IMR-90 (cell line): ENCODE measurements at regions of chr6 and their contacts with region 1.

Region 1: DNA sequence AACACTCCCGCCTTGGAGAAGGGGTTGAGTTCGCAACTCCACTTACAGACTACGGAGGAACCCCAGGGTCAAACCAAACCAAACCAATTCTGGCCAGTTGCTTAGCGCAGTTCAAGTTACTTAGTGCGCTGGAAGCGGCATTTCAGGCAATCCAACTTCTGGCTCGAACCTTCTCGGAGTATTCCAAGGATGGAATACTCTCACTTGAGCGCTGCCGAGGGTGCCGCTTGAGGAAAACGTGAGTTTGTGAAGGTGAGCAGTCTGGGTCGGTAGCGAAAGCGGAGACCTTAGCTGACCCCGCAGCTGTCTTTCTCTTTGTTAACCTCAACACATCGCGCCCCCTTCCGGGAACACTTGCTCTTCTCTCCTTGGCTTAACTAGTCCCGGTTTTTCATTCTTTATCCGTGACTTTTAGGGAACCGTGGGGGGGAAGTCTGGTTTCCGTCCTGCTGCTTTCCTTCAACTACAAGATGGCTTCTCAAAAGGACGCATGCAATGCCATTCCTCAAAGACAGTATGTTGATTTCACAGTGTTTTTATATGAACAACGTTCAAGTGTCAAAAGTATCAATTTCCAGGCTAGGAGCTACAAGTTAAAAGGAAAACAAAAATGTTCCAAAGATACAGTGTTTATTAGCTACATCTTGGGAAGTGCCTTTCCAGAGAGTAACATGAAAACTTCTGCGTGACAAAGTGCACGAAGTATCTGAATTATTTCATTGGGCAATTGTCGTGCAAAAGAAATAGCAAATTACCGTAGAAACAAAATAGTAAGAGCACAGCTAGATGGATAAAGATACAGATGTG is 742 bp upstream of the PNISR start:
- DNase-seq: peak; percentile 89
- ATAC-seq: peak; percentile 66
- H3K4me3 ChIP-seq: peak overlapping the region; percentile 52
- H3K27ac ChIP-seq: peak overlapping the region; percentile 92
- H3K4me1 ChIP-seq: peaks cover 2% of the 10 kb centered on the region
- H3K27me3 ChIP-seq: no peaks in the 10 kb centered on the region
- CTCF ChIP-seq: peak; percentile 54
- POLR2A ChIP-seq: no peak; the same call in 1 of the 2 replicates
- RAD21 ChIP-seq: peak; percentile 28; the same call in 1 of the 2 replicates

Region 2: GRCh38 chr6:99415446-99415845 is 10.4 kb before region 1 on chr6:
- CTCF ChIA-PET with region 1: interaction called, 4 read pairs
- POLR2A ChIA-PET with region 1: no interaction called
- dilution Hi-C with region 1: no loop called
- in situ Hi-C with region 1: no loop called
- intact Hi-C with region 1: loop called (anchors 1 kb)
- DNase-seq: peak; percentile 51
- ATAC-seq: peak; percentile 92
- H3K4me3 ChIP-seq: no peak overlapping the region
- H3K27ac ChIP-seq: no peak overlapping the region
- H3K4me1 ChIP-seq: peaks cover 2% of the 10 kb centered on the region
- H3K27me3 ChIP-seq: no peaks in the 10 kb centered on the region
- CTCF ChIP-seq: no peak
- POLR2A ChIP-seq: no peak
- RAD21 ChIP-seq: no peak

Region 3: GRCh38 chr6:99520855-99521632 is 95.2 kb after region 1 on chr6:
- CTCF ChIA-PET with region 1: no interaction called
- POLR2A ChIA-PET with region 1: no interaction called
- dilution Hi-C with region 1: no loop called
- in situ Hi-C with region 1: no loop called
- intact Hi-C with region 1: loop called (anchors 5 kb)
- DNase-seq: peak; percentile 77
- ATAC-seq: peak; percentile 95
- H3K4me3 ChIP-seq: peak overlapping the region; percentile 87
- H3K27ac ChIP-seq: peak overlapping the region; percentile 96
- H3K4me1 ChIP-seq: peaks cover 2% of the 10 kb centered on the region; the same call in 1 of the 2 replicates
- H3K27me3 ChIP-seq: no peaks in the 10 kb centered on the region
- CTCF ChIP-seq: peak; percentile 80
- POLR2A ChIP-seq: peak; percentile 84
- RAD21 ChIP-seq: peak; percentile 54

Region 4: DNA sequence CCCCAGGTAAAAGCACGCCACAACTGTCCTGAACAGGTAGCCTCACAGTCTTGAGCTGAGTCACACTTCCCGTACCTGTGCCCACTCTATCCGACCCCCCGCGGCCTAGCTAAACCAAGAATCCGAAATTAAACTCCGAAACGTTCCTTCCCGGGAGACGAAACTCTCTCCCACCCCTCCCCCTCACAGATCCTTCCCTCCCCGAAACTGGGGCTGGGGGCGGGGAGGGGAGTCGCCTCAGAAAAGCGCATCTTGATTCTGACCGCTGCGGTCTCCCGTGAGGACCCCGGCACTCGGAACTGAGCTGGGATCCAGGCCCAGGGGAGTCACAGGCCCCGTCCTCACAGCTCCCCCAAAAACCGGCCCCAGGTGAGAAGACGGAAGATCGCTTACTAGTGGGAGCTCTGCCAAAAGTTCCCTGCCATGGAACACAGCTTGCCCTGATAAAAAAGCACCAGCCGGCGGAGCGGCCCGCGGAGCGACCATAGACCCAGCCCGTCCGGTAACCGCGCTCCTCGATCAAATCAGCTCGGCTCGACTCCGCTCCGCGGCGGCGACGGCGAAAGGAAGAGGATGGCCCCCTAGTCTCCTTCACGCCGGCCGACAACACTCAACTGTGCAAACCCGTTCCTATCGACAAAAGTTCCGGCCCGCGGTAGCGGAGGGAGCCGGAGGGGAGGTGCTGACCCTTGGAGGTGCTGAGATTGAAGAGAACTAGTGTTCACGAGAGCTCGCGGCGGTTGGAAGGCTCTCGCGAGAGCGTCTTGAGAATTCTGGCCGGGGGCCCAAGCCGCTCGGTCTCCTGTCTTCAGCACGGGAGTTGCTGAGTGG is 142.5 kb after region 1 on chr6 and contains the start of gene CCNC:
- CTCF ChIA-PET with region 1: no interaction called
- POLR2A ChIA-PET with region 1: no interaction called
- dilution Hi-C with region 1: no loop called
- in situ Hi-C with region 1: no loop called
- intact Hi-C with region 1: loop called (anchors 5 kb)
- DNase-seq: peak; percentile 96
- ATAC-seq: peak; percentile 100
- H3K4me3 ChIP-seq: peak within 1 kb of the TSS; percentile 87
- H3K27ac ChIP-seq: peak within 1 kb of the TSS; percentile 64
- H3K4me1 ChIP-seq: no peaks in the 10 kb centered on the region
- H3K27me3 ChIP-seq: no peaks in the 10 kb centered on the region; the same call in 1 of the 2 replicates
- CTCF ChIP-seq: no peak
- POLR2A ChIP-seq: peak; percentile 91
- RAD21 ChIP-seq: no peak
- total RNA-seq, gene CCNC: 95.7 and 127 TPM in 2 replicates

Region 5: DNA sequence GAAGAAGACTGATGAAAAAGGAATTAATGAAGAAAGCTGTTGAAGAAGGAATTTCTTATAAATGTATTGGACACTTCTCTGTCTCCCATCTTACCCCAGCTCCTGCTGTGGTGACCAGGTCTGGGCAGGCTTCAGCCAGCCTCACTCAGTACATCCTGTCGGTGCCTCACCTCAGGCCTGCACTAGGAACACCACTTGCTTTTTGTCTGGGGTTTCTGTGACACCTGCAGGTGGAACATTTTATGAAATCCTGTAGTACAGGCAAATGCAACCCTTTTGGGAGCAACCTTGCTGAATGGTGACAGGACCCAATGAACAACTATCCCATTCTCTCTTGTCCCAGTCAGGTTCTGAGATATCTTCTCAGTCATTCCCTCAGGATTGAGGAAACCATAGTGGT is 310.5 kb after region 1 on chr6:
- CTCF ChIA-PET with region 1: no interaction called
- POLR2A ChIA-PET with region 1: no interaction called
- dilution Hi-C with region 1: no loop called
- in situ Hi-C with region 1: no loop called
- intact Hi-C with region 1: no loop called
- DNase-seq: no peak
- ATAC-seq: no peak
- H3K4me3 ChIP-seq: no peak overlapping the region
- H3K27ac ChIP-seq: no peak overlapping the region
- H3K4me1 ChIP-seq: no peaks in the 10 kb centered on the region
- H3K27me3 ChIP-seq: 0 out of 2 replicates have a peak, but pooled peaks cover 3% of the 10 kb centered on the region
- CTCF ChIP-seq: no peak
- POLR2A ChIP-seq: no peak
- RAD21 ChIP-seq: no peak